ENCODE measurements at regions of chr19 and their contacts with region 1.

Region 1: DNA sequence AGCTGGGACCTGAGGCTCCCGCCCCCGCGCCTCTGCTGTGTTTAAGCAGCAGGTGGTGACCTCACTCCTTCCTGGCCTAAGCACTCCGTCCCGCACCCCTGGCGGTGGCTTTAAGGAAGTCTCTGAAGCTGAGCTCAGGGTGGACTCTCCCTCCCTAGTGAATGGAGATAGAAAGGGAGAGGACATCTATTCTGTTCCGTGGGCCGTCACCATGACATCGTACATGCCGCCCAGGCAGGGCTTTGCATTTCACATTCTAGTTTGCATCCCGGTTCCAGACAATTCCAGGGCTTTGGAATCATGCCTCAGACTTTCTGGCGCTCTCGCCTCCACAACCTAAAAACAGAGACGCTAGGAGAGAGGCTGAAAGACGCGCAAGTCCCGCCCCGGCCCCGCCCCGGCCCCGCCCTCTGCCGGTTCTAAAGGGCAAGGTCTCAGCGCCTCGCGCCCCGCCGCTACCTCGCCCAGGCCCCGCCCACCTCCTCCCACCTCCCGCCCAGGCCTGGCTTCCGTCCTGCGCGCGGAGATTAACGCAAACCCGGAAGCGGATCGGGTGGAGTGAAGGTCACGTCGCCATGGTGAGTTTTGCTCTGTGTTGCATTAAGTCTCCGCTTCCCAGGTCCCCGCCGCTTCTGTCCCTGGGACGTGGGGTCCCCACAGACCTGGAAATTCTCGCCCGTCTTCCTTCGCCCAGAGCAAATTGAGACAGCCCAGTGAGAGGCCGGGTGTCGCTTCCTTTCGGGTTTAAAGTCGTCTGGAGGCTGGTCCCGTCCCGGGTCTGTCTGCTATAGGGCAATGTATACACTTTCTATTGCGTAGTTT is at the start of gene ZNF808:
- H3K4me3 Mint-ChIP-seq: peak within 1 kb of the TSS; percentile 100
- H3K27ac Mint-ChIP-seq: peak within 1 kb of the TSS; percentile 99
- H3K4me1 Mint-ChIP-seq: peaks cover 33% of the 10 kb centered on the region
- H3K27me3 Mint-ChIP-seq: no peaks in the 10 kb centered on the region

Region 2: DNA sequence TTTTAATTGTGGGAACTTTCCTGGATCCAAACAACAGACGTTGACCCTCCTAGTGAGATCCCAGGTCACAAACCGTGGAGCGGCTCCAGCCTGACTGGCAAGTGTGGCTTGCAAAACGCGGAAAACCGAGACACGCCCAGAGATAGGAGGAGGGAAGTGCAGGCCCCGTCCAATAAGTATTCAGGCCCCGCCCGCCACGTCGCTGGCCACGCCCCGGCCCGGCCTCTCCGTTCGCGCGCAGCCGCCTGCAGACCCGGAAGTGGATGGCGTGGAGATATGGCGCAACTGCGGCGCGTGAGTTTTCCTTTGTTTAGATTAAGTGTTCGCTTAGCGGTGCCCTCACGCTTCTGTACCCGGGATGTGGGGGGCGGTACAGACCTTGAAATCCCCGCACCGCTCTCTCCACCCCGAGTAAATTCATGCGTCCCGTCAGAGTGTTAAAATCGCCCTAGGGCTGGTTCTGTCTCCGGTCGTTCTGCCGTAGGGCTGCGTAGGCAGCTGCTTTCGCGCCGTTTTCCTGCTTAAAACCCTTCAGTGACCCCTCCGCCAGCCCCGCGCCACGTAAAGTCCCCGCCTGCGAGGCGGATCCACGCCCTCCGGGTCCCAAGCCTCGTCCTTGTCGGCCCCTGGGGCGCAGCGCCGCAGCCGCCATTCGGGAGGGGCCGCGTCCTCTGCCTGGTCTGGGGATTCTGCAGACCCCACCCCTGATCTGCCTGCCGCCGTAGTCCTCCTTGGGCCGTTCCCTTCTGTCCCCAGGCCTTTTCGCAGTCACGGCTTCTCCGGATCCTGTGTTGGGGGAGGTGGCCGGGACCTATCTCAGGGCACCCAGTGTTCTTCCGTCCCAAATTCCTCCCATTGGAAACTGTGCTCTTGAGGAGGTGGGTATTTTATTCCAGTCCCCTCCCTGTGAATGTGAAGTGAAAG is 257.7 kb before region 1 on chr19 and contains the start of gene ZNF766:
- intact Hi-C with region 1: loop called (anchors 1 kb)
- H3K4me3 Mint-ChIP-seq: peak within 1 kb of the TSS; percentile 95
- H3K27ac Mint-ChIP-seq: peak within 1 kb of the TSS; percentile 93
- H3K4me1 Mint-ChIP-seq: peaks cover 13% of the 10 kb centered on the region
- H3K27me3 Mint-ChIP-seq: no peaks in the 10 kb centered on the region

Region 3: GRCh38 chr19:52453324-52454094 is 73.8 kb before region 1 on chr19 and contains the start of gene ZNF578:
- intact Hi-C with region 1: no loop called
- H3K4me3 Mint-ChIP-seq: peak within 1 kb of the TSS; percentile 70
- H3K27ac Mint-ChIP-seq: peak within 1 kb of the TSS; percentile 51
- H3K4me1 Mint-ChIP-seq: peaks cover 10% of the 10 kb centered on the region
- H3K27me3 Mint-ChIP-seq: peaks cover 8% of the 10 kb centered on the region

Region 4: GRCh38 chr19:52570000-52570861 is 42.9 kb after region 1 on chr19 and contains the start of gene ZNF701:
- intact Hi-C with region 1: loop called (anchors 5 kb)
- H3K4me3 Mint-ChIP-seq: peak within 1 kb of the TSS; percentile 87
- H3K27ac Mint-ChIP-seq: peak within 1 kb of the TSS; percentile 94
- H3K4me1 Mint-ChIP-seq: peaks cover 25% of the 10 kb centered on the region
- H3K27me3 Mint-ChIP-seq: no peaks in the 10 kb centered on the region

Region 5: DNA sequence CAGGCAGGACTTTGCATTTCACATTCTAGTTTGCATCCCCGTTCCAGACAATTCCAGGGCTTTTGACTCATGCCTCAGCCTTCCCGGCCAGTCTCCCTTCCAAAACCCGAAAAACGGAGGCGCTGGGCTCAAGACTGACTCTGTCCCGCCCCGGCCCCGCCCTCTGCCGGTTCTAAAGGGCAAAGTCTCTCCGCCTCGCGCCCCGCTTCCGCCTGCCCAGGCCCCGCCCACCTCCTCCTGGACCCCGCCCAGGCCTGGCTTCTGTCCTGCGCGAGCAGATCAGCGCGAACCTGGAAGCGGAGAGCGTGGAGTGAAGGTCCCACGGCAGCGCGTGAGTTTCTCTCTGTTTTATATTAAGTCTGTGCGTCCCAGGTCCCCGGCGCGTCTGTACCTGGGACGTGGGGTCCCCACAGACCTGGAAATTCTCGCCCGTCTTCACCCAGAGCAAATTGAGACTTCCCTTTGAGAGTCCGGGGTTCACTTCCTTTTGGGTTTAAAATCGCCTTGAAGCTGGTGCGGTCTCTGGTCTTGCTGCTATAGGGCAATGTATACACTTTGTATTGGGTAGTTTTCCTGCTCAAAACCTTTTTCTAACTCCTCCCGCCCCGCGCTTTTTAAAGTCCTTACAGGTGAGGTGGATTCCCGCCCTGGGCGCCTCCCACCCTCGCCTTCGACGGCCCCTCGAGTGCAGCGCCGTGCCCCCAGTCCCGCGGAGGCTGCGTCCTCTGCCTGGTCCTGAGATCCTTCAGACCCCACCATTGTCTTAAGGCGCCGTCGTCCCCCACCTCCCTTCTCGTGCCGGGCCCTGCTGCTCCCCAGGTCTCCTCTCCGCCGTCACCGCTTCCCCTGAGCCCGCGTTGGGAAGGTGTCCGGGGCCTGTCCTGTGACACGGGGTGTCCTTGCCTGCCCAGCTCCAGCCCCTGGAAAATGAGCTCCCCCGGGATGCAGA is 74.0 kb after region 1 on chr19:
- intact Hi-C with region 1: loop called (anchors 5 kb)
- H3K4me3 Mint-ChIP-seq: peak overlapping the region; percentile 86
- H3K27ac Mint-ChIP-seq: peak overlapping the region; percentile 74
- H3K4me1 Mint-ChIP-seq: peaks cover 14% of the 10 kb centered on the region
- H3K27me3 Mint-ChIP-seq: no peaks in the 10 kb centered on the region

Region 6: DNA sequence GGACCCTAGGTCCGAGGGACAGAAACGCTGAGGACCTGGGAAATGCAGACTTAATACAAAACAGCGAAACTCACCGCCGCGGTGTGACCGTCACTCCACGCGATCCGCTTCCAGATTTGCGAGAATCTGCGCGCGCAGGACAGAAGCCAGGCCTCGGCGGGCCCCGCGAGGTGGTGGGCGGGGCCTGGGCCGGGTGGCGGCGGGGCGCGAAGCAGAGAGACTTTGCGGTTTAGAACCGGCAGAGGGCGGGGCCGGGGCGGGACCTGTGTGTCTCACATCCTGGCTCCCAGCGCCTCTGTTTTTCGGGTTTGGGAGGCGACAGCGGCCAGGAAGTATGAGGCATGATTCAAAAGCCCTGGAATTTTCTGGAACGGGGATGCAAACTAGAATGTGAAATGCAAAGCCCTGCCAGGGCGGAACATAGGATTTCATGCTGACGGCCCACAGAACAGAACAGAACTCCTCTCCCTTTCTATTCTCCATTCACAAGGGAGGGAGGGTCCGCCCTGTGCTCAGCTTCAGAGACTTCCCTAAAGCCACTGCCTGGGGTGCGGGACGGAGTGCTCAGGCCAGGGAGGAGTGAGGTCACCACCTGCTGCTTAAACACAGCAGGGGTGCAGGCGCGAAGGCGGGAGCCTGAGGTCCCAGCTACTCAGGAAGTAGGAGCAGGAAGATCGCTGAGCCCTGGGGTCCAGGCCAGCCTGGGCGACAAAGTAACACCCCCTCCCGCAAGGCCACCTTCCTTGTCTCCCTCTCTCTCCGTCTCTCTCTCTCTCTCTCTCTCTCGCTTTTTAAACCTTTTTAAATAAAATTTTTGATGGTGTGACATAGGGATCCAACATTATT is 163.2 kb after region 1 on chr19:
- intact Hi-C with region 1: loop called (anchors 5 kb)
- H3K4me3 Mint-ChIP-seq: peak overlapping the region; percentile 78
- H3K27ac Mint-ChIP-seq: peak overlapping the region; percentile 95
- H3K4me1 Mint-ChIP-seq: peaks cover 33% of the 10 kb centered on the region
- H3K27me3 Mint-ChIP-seq: peaks cover 3% of the 10 kb centered on the region